ENCODE measurements at regions of chr7 and their contacts with region 1.

Region 1: DNA sequence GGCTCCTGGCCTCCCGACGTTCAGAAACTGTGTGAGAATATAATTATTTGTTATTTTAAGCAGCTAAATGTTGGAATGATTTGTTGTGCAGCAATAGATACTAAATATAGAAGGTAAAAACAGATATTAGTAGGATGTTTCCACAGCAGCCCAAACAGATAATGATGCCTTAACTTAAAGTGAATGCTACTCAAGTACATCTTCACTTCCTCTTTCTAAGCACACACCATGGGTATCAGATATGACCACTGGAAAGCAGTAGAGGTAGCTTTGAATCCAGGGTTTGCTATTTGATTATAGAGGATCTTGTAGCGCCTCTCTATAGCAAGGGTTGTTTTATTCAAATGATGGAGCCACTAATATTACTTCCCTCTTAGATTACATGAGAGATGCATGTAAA is 38.2 kb upstream of the BET1 start:
- DNase-seq: no peak
- H3K4me3 ChIP-seq: no peak overlapping the region
- H3K27ac ChIP-seq: no peak overlapping the region
- H3K4me1 ChIP-seq: peaks cover 8% of the 10 kb centered on the region
- H3K27me3 ChIP-seq: no peaks in the 10 kb centered on the region
- CTCF ChIP-seq: no peak

Region 2: DNA sequence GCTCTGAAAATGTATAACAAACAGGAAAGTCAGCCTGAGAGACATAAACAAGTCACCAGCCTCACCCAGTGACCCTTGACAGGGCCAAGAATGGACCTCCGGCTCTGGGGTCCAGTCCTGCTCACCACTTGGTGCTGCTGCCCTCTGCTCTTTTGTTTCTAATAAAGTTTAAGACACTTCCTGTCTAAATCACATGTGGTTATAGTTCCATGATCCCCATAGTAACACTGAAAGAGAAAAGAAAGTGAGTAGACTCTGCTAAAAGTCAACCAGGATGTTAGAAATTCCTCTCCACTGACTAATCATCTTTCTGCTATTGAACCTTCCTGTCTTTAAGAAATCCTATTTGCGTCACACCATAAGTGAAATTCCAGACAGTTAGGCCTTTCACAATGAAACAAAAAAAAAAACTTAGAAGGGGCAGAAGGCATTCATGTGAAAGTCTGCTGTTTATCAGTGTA is 140.9 kb after region 1 on chr7:
- CTCF ChIA-PET with region 1: no interaction called
- dilution Hi-C with region 1: no loop called
- in situ Hi-C with region 1: no loop called
- intact Hi-C with region 1: loop called (anchors 2 kb)
- DNase-seq: peak; percentile 93
- H3K4me3 ChIP-seq: peak overlapping the region in 1 of 3 experiments; percentile 2
- H3K27ac ChIP-seq: peak overlapping the region; percentile 97
- H3K4me1 ChIP-seq: peaks cover 20% of the 10 kb centered on the region
- H3K27me3 ChIP-seq: no peaks in the 10 kb centered on the region
- CTCF ChIP-seq: no peak

Measured in mammary epithelial cell (primary cell).